CD4-positive, alpha-beta memory T cell (primary cell): ENCODE measurements at regions of chr6 and their contacts with region 1.

Region 1: DNA sequence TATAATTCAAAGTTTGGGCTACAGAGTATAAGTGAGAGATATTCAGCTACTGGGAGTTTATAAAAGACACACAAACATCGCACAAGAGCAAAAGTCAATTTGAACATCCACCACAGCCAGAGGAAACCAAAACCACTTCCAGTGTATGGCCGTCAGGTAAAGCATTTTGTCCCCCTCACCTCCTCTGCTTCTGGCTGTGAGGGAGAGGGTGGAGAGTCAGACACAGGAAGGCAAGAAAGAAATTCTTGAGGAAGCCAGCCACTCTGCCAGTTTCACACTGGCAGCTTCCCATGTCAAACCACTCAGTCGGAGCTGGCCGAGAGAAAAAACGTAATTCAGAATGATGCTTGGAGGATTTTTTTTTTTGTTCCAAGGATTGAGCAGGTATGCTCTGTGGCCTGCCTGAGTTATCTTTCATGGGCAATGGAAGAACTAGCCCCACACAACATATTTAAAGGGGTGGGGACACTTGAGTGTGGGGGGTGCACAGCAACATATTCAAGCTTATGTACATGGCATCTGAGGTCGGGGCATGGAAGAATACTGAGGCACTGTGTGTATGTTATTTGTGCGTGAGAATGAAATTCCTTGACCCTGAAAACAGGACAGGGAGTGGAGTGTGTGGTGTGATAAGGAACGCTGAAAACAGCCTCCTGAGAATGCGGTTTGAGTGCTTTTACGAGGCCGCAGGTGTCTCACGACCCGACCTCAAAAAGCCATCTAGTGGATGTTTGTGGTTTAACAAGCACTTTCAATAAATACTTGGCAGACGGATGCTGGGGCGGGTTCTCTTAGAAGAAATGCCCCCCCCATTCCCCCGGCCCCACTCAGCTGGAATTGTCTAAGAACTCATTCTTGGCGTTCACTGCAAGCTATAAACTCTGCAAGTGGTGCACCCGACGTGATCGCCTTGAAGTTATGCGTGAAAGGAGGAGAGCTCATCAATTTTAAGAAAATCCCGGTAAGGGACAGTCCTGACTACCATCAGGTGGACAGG is 27.5 kb upstream of the ZBTB22 start:
- DNase-seq: peak; percentile 81 to 87 (median 84)
- H3K4me3 ChIP-seq: peak overlapping the region; percentile 11 to 61
- H3K4me3 Mint-ChIP-seq: peak overlapping the region; percentile 76 to 92 (median 85)
- H3K27ac ChIP-seq: peak overlapping the region; percentile 79
- H3K27ac Mint-ChIP-seq: peak overlapping the region; percentile 88 to 99 (median 98)
- H3K4me1 ChIP-seq: peaks cover 44% of the 10 kb centered on the region
- H3K4me1 Mint-ChIP-seq: peaks cover 23 to 49% (median 37%) of the 10 kb centered on the region in 4 donors
- H3K27me3 ChIP-seq: no peaks in the 10 kb centered on the region
- H3K27me3 Mint-ChIP-seq: no peaks in the 10 kb centered on the region

Region 2: GRCh38 chr6:33271458-33272274 is 73.3 kb before region 1 on chr6 and contains the starts of genes RPS18 and VPS52:
- CTCF ChIA-PET with region 1: interaction called, 32 read pairs
- POLR2A ChIA-PET with region 1: interaction called, 63 read pairs
- intact Hi-C with region 1: loop called (anchors 1 kb)
- DNase-seq: peak; percentile 95 to 98 (median 96)
- H3K4me3 ChIP-seq: peak within 1 kb of the TSS; percentile 75 to 90
- H3K4me3 Mint-ChIP-seq: peak within 1 kb of the TSS; percentile 96 to 100 (median 98)
- H3K27ac ChIP-seq: peak within 1 kb of the TSS; percentile 85
- H3K27ac Mint-ChIP-seq: peak within 1 kb of the TSS; percentile 97 to 100 (median 99)
- H3K4me1 ChIP-seq: peaks cover 62% of the 10 kb centered on the region
- H3K4me1 Mint-ChIP-seq: peaks cover 43 to 78% (median 61%) of the 10 kb centered on the region in 4 donors
- H3K27me3 ChIP-seq: no peaks in the 10 kb centered on the region
- H3K27me3 Mint-ChIP-seq: no peaks in the 10 kb centered on the region
- total RNA-seq, gene RPS18: 3,264 to 3,439 TPM
- total RNA-seq, gene VPS52: 89.4 to 95.7 TPM

Region 3: GRCh38 chr6:33288921-33289748 is 55.9 kb before region 1 on chr6 and contains the starts of genes PFDN6 and WDR46:
- CTCF ChIA-PET with region 1: interaction called, 12 read pairs
- POLR2A ChIA-PET with region 1: interaction called, 66 read pairs
- intact Hi-C with region 1: loop called (anchors 1 kb)
- DNase-seq: peak; percentile 87 to 92 (median 89)
- H3K4me3 ChIP-seq: peak within 1 kb of the TSS; percentile 73 to 84
- H3K4me3 Mint-ChIP-seq: peak within 1 kb of the TSS; percentile 96 to 100 (median 98)
- H3K27ac ChIP-seq: peak within 1 kb of the TSS; percentile 71
- H3K27ac Mint-ChIP-seq: peak within 1 kb of the TSS; percentile 79 to 98 (median 95)
- H3K4me1 ChIP-seq: peaks cover 30% of the 10 kb centered on the region
- H3K4me1 Mint-ChIP-seq: peaks cover 24 to 48% (median 36%) of the 10 kb centered on the region in 4 donors
- H3K27me3 ChIP-seq: no peaks in the 10 kb centered on the region
- H3K27me3 Mint-ChIP-seq: no peaks in the 10 kb centered on the region
- total RNA-seq, gene PFDN6: 43.6 to 45.5 TPM
- total RNA-seq, gene WDR46: 60.8 to 66.1 TPM

Region 4: DNA sequence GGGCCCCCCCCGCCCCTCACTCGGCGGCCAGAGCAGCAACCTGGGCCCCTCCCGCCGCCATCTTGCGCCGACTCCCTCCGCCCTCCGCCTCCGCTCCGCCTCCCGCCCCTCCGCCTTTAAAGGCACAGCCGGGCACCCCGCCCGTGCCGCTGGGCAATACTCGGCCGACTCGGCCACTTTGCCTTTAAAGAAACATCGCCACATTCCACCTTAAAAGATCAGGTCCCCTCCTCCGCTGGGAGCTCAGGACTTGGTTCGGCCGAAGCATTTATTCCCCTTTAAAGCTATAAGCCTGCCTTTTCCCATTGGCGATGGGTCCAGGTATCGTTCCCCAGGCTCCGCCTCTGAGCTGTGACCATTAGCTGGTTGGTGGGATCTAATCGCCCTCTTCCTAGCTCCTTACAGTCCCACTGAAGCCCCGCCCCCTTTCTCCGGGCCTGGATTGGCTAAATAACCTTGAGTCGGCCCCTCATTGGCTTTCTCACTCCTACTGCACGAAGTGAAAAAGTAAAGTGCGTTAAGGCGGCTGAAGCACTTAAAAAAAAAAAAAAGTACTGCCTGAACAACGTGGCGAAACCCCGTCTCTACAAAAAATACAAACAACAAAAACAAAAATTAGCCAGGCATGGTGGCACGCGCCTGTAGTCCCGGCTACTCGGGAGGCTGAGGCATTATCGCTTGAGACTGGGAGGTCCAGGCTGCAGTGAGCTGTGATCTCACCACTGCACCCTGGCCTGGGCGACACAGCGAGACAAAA is 27.2 kb before region 1 on chr6 and contains the start of gene ZBTB22:
- CTCF ChIA-PET with region 1: interaction called, 47 read pairs
- POLR2A ChIA-PET with region 1: interaction called, 99 read pairs
- intact Hi-C with region 1: loop called (anchors 1 kb)
- DNase-seq: peak; percentile 96 to 99 (median 97)
- H3K4me3 ChIP-seq: peak within 1 kb of the TSS; percentile 73 to 100
- H3K4me3 Mint-ChIP-seq: peak within 1 kb of the TSS; percentile 98 to 100 (median 99)
- H3K27ac ChIP-seq: peak within 1 kb of the TSS; percentile 83
- H3K27ac Mint-ChIP-seq: peak within 1 kb of the TSS; percentile 98 to 99 (median 98)
- H3K4me1 ChIP-seq: peaks cover 73% of the 10 kb centered on the region
- H3K4me1 Mint-ChIP-seq: peaks cover 40 to 100% (median 62%) of the 10 kb centered on the region in 4 donors
- H3K27me3 ChIP-seq: no peaks in the 10 kb centered on the region
- H3K27me3 Mint-ChIP-seq: no peaks in the 10 kb centered on the region
- total RNA-seq, gene ZBTB22: 28.6 to 28.7 TPM

Region 5: GRCh38 chr6:33356295-33356694 is 11.3 kb after region 1 on chr6:
- CTCF ChIA-PET with region 1: no interaction called
- POLR2A ChIA-PET with region 1: no interaction called
- intact Hi-C with region 1: no loop called
- DNase-seq: no peak
- H3K4me3 ChIP-seq: no peak overlapping the region
- H3K4me3 Mint-ChIP-seq: no peak overlapping the region
- H3K27ac ChIP-seq: no peak overlapping the region
- H3K27ac Mint-ChIP-seq: no peak overlapping the region
- H3K4me1 ChIP-seq: no peaks in the 10 kb centered on the region
- H3K4me1 Mint-ChIP-seq: no peaks in the 10 kb centered on the region
- H3K27me3 ChIP-seq: no peaks in the 10 kb centered on the region
- H3K27me3 Mint-ChIP-seq: peaks cover 1 to 2% of the 10 kb centered on the region in 2 donors

Region 6: GRCh38 chr6:33417903-33418689 is 73.1 kb after region 1 on chr6 and contains the start of gene CUTA:
- CTCF ChIA-PET with region 1: interaction called, 5 read pairs
- POLR2A ChIA-PET with region 1: interaction called, 24 read pairs
- intact Hi-C with region 1: no loop called
- DNase-seq: peak; percentile 97 to 100 (median 100)
- H3K4me3 ChIP-seq: peak within 1 kb of the TSS; percentile 82 to 94
- H3K4me3 Mint-ChIP-seq: peak within 1 kb of the TSS; percentile 87 to 97 (median 94)
- H3K27ac ChIP-seq: peak within 1 kb of the TSS; percentile 97
- H3K27ac Mint-ChIP-seq: peak within 1 kb of the TSS; percentile 99 to 100 (median 99)
- H3K4me1 ChIP-seq: peaks cover 72% of the 10 kb centered on the region
- H3K4me1 Mint-ChIP-seq: peaks cover 43 to 87% (median 61%) of the 10 kb centered on the region in 4 donors
- H3K27me3 ChIP-seq: no peaks in the 10 kb centered on the region
- H3K27me3 Mint-ChIP-seq: no peaks in the 10 kb centered on the region
- total RNA-seq, gene CUTA: 210 to 217 TPM

Region 7: GRCh38 chr6:33454009-33454946 is 109.3 kb after region 1 on chr6 and contains the start of gene ZBTB9:
- CTCF ChIA-PET with region 1: interaction called, 3 read pairs
- POLR2A ChIA-PET with region 1: interaction called, 11 read pairs
- intact Hi-C with region 1: no loop called
- DNase-seq: peak; percentile 92 to 96 (median 92)
- H3K4me3 ChIP-seq: peak within 1 kb of the TSS; percentile 84 to 89
- H3K4me3 Mint-ChIP-seq: peak within 1 kb of the TSS; percentile 93 to 99 (median 97)
- H3K27ac ChIP-seq: peak within 1 kb of the TSS; percentile 78
- H3K27ac Mint-ChIP-seq: peak within 1 kb of the TSS; percentile 82 to 98 (median 95)
- H3K4me1 ChIP-seq: peaks cover 29% of the 10 kb centered on the region
- H3K4me1 Mint-ChIP-seq: peaks cover 14 to 43% (median 29%) of the 10 kb centered on the region in 4 donors
- H3K27me3 ChIP-seq: no peaks in the 10 kb centered on the region
- H3K27me3 Mint-ChIP-seq: no peaks in the 10 kb centered on the region
- total RNA-seq, gene ZBTB9: 12.1 to 12.8 TPM